PC-3 (cell line): ENCODE measurements at regions of chr17 and their contacts with region 1.

Region 1: GRCh38 chr17:49290690-49291359 is 60.2 kb upstream of the PHOSPHO1 start:
- DNase-seq: peak; percentile 69
- ATAC-seq: peak; percentile 77
- H3K4me3 ChIP-seq: no peak overlapping the region
- H3K27ac ChIP-seq: no peak overlapping the region
- H3K4me1 ChIP-seq: no peaks in the 10 kb centered on the region
- H3K27me3 ChIP-seq: no peaks in the 10 kb centered on the region
- CTCF ChIP-seq: peak; percentile 91

Region 2: GRCh38 chr17:49180303-49180702 is 110.5 kb before region 1 on chr17:
- CTCF ChIA-PET with region 1: no interaction called
- POLR2A ChIA-PET with region 1: no interaction called
- intact Hi-C with region 1: loop called (anchors 1 kb)
- DNase-seq: peak; percentile 67
- ATAC-seq: peak; percentile 75
- H3K4me3 ChIP-seq: no peak overlapping the region
- H3K27ac ChIP-seq: no peak overlapping the region
- H3K4me1 ChIP-seq: no peaks in the 10 kb centered on the region
- H3K27me3 ChIP-seq: no peaks in the 10 kb centered on the region
- CTCF ChIP-seq: peak; percentile 95

Region 3: GRCh38 chr17:49445591-49445990 is 154.8 kb after region 1 on chr17:
- CTCF ChIA-PET with region 1: interaction called, 10 read pairs
- POLR2A ChIA-PET with region 1: no interaction called
- intact Hi-C with region 1: no loop called
- DNase-seq: no peak
- ATAC-seq: no peak
- H3K4me3 ChIP-seq: no peak overlapping the region
- H3K27ac ChIP-seq: no peak overlapping the region
- H3K4me1 ChIP-seq: no peaks in the 10 kb centered on the region
- H3K27me3 ChIP-seq: peaks cover 39% of the 10 kb centered on the region
- CTCF ChIP-seq: no peak